HepG2 (cell line): ENCODE measurements at regions of chr7 and their contacts with region 1.

Region 1: DNA sequence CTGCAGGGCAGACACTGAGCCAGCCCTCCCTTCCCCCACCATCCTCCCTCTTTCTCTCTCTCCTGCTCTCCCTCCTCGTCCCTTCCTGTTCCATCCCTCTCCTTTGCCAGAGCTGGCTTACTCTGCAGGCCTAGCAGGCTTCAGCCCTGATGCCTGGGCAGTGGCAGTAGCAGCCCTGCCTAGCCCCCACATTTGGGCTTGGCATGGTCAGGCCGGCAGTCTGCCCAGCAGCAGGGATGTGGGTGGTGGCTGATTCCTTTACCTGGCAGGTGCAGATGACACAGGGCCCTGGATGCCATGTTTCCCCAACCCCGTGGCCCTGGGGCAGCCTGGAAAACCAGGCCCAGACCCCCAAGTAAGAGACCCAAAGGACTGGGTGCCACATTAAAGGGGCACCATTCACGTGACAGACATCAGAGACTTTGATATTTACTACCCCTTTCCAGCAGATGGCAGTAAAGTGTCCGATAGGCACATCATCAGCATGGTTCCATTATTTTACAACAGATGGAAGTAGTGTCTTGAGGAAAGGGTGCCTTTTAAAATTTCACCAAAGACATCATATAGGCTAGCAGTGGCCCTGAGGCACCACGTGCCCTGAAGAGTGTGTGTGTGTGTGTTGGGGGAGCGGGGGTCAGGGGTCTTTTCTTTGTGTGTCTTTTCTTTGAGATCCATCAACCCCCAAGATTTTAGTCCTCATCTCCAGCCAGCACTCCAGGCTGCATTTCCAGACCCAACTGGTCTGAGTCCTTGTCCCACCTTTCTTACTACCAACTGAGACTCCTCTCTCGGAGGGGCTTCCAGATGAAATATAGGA is 5.9 kb downstream of the KCP start:
- DNase-seq: peak; percentile 52
- ATAC-seq: peak; percentile 64
- H3K4me3 ChIP-seq: no peak overlapping the region
- H3K27ac ChIP-seq: no peak overlapping the region
- H3K4me1 ChIP-seq: peaks cover 6% of the 10 kb centered on the region
- H3K27me3 ChIP-seq: peaks cover 0 to 19% of the 10 kb centered on the region in 2 experiments; a peak in 2 of 5 replicates
- CTCF ChIP-seq: peak; percentile 78
- EP300 ChIP-seq: no peak
- POLR2A ChIP-seq: no peak
- RAD21 ChIP-seq: no peak

Region 2: DNA sequence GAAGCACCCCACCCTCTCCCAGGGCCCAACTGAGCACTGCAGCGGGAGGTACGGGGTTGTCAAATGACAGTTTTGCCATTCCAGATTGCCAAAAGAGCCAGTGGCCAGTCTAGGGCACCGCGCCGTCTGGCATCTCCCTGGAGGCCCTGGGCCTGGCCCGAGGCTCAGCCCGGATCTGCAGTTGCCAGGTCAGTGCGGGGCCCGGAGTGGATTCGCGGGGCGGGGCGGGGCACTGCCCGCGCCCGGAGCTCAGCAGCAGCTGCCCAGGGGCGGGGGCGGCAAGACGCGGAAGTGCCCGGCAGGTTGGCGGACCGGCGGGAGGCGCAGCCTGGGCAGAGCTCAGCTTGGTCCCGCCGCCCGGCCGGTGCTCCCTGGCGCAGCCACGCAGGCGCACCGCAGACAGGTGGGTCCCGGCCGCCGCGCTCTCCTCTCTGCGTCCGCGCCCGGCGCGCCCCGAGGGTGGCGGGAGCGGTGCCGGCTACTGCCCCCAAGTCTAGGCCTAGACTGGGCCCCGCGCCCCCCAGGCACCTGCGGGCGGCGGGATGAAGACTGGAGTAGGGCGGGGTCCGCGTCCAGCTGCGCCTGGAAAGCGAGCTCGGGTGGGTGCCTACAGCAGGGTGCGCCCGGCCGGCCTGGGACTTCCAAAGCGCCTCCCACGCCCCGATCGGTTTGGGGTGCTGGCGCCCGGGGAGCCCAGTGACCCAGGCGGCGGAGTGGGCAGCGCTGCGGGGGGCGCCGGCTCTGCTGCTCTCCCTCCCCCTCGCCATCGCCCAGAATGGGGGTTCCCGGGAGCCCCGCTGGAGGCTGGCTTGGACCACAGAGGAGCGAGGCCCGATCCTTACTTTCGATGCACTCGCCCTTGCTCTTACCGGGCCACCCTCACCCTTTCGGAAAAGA is 33.3 kb after region 1 on chr7 and contains the start of gene IRF5:
- CTCF ChIA-PET with region 1: no interaction called
- POLR2A ChIA-PET with region 1: no interaction called
- in situ Hi-C with region 1: no loop called
- intact Hi-C with region 1: loop called (anchors 2 kb)
- DNase-seq: no peak
- ATAC-seq: peak; percentile 47
- H3K4me3 ChIP-seq: peak within 1 kb of the TSS; percentile 56 to 75 (median 57)
- H3K27ac ChIP-seq: no peak within 1 kb of the TSS
- H3K4me1 ChIP-seq: peaks cover 78% of the 10 kb centered on the region
- H3K27me3 ChIP-seq: peaks cover 1 to 29% of the 10 kb centered on the region in 2 experiments; a peak in 4 of 5 replicates
- CTCF ChIP-seq: no peak
- EP300 ChIP-seq: no peak
- POLR2A ChIP-seq: no peak
- RAD21 ChIP-seq: no peak
- total RNA-seq, gene IRF5: 2.0 and 2.9 TPM in 2 replicates

Region 3: DNA sequence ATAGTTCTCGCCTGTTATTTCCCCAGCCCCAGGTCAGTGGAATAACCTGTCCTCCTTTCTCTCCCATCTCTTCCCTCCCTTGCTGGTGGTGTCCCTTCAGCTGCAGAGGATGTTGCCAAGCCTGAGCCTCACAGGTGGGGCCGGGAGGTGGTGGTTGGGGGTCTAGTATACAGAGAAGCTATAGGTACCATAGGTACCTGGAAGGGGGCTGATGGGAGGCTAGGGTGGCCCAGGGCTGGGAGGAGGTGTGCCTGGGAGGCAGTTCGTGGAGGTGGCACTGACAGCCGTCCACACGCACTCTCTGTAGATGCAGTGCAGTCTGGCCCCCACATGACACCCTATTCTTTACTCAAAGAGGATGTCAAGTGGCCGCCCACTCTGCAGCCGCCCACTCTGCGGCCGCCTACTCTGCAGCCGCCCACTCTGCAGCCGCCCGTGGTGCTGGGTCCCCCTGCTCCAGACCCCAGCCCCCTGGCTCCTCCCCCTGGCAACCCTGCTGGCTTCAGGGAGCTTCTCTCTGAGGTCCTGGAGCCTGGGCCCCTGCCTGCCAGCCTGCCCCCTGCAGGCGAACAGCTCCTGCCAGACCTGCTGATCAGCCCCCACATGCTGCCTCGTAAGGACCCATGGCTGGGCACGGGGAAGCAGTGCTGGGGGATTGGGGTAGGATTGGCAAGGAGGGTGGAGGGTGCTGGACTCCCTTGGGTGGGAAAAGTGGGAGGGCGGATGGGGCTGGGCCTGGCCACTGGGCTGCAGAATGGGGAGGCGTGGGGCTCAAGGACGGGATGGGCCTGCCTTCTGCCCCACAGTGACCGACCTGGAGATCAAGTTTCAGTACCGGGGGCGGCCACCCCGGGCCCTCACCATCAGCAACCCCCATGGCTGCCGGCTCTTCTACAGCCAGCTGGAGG is 42.6 kb after region 1 on chr7:
- CTCF ChIA-PET with region 1: interaction called, 8 read pairs
- POLR2A ChIA-PET with region 1: no interaction called
- in situ Hi-C with region 1: loop called (anchors 5 kb)
- intact Hi-C with region 1: no loop called
- DNase-seq: no peak
- ATAC-seq: peak; percentile 68
- H3K4me3 ChIP-seq: no peak overlapping the region
- H3K27ac ChIP-seq: no peak overlapping the region
- H3K4me1 ChIP-seq: no peaks in the 10 kb centered on the region
- H3K27me3 ChIP-seq: no peaks in the 10 kb centered on the region
- CTCF ChIP-seq: peak; percentile 58
- EP300 ChIP-seq: no peak
- POLR2A ChIP-seq: no peak
- RAD21 ChIP-seq: no peak

Region 4: GRCh38 chr7:129091484-129092002 is 187.0 kb after region 1 on chr7:
- CTCF ChIA-PET with region 1: interaction called, 27 read pairs
- POLR2A ChIA-PET with region 1: no interaction called
- in situ Hi-C with region 1: loop called (anchors 5 kb)
- intact Hi-C with region 1: loop called (anchors 1 kb)
- DNase-seq: peak; percentile 63
- ATAC-seq: peak; percentile 97
- H3K4me3 ChIP-seq: peak overlapping the region in 1 of 3 experiments; percentile 29; a peak in 2 of 6 replicates
- H3K27ac ChIP-seq: no peak overlapping the region
- H3K4me1 ChIP-seq: peaks cover 26% of the 10 kb centered on the region
- H3K27me3 ChIP-seq: no peaks in the 10 kb centered on the region
- CTCF ChIP-seq: peak; percentile 98
- EP300 ChIP-seq: no peak
- POLR2A ChIP-seq: no peak
- RAD21 ChIP-seq: peak; percentile 92